Dendritic cell treated with granulocyte-macrophage colony-stimulating factor and Interleukin-4, amounts not matched to agents 40 ng/mL and 50 ng/mL, for 4 days (primary cell): ENCODE measurements at regions of chr6 and their contacts with region 1.

Region 1: GRCh38 chr6:11732036-11732631 is 46.5 kb downstream of the ADTRP start:
- H3K4me3 Mint-ChIP-seq: peak overlapping the region; percentile 53
- H3K27ac Mint-ChIP-seq: peak overlapping the region; percentile 70
- H3K4me1 Mint-ChIP-seq: peaks cover 74% of the 10 kb centered on the region
- H3K27me3 Mint-ChIP-seq: peaks cover 32% of the 10 kb centered on the region

Region 2: DNA sequence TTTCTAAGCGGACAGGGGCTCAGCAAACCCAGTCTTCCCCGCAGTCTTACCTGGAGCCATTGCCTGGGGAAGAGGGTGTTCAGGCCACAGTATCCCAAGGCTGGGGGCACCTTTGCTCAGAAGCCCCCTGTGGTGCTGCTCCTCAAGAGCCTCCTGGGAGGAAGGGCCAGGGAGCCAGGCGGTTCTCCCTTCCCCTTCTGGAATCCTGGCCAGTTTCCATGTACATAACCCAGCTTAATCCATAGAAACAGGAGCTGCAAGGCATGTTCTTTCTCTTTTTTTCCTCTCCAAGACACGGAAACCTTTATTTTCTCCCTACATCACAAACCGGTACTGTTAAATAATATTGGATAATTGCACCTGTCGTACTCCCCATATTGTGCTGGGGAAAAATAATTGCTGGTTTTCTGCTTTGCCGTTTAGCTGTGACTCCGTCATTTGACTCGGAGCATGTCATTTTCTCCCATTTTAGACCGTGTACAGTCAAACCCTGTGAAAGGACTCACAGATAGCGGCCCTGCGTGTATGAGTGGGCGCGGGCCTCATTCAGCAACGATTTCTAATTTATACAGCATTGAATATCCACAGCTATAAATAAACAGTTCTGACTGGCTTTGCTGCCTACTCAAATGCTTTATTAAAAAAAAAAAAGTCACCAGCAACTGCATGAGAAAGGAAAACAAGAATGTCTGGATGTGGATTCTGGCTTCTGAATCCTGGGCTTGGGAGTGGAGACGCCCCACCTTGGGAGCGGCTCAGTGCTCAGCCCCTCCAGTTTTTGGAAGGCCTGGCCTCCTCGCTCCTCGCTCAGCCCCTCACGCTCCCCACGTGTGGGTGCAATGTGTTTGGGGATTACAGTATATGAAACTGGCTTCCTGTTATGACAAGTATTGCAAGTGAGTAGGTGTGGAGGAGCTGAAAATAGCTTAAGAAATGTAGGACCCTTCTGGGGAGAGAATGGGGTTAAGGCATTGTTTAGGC is 20.8 kb before region 1 on chr6:
- intact Hi-C with region 1: no loop called
- H3K4me3 Mint-ChIP-seq: no peak overlapping the region
- H3K27ac Mint-ChIP-seq: no peak overlapping the region
- H3K4me1 Mint-ChIP-seq: peaks cover 37% of the 10 kb centered on the region
- H3K27me3 Mint-ChIP-seq: peaks cover 4% of the 10 kb centered on the region

Region 3: DNA sequence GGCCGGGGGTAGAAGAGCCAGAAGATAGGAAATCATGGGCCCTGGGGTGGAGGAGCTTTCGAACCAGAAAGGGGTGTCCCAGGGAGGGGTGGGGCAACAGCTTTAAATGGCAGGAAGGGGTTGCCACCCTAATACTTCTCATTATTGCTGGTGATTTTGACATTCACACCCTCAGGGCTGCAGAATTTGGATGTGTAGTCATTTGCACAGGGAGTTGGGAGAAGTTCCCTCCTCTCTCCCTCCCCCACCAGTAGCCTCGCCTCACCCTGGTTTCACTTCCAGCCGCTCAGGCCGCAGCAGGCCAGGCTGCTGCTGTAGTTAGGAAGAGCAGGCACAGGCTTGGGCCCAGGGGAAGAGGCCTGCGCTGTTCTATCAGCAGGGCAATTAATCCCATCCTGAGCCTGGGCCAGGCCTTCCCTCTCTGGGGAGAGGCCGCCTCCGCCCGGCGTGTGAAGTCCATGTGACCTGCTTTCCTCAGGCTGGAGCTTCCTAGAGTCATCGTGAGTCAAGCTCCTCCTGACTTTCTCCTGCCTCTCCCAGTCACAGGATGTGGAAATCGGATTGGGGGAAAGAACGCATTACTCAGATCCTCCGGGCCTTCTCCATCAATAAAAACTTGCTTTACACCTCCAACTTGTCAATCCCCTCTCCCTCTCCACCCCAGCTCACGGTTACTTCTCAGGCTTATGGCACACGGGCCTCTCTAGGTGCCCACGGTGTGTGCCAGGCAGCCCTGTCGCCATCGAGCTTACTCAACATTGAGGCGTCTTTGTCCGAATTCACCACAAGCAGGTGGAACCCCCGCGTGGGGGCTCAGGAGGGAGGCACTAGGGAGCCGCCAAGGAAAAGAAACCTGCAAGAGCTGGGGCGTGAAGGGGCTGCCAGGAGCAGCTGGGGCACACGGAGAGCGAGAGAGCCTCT is 38.7 kb after region 1 on chr6:
- intact Hi-C with region 1: loop called (anchors 2 kb)
- H3K4me3 Mint-ChIP-seq: peak overlapping the region; percentile 51
- H3K27ac Mint-ChIP-seq: peak overlapping the region; percentile 88
- H3K4me1 Mint-ChIP-seq: peaks cover 73% of the 10 kb centered on the region
- H3K27me3 Mint-ChIP-seq: no peaks in the 10 kb centered on the region